Activated CD4-positive, alpha-beta memory T cell treated with anti-CD3 and anti-CD28 coated beads for 36 hours (primary cell): ENCODE measurements at regions of chr4 and their contacts with region 1.

Region 1: DNA sequence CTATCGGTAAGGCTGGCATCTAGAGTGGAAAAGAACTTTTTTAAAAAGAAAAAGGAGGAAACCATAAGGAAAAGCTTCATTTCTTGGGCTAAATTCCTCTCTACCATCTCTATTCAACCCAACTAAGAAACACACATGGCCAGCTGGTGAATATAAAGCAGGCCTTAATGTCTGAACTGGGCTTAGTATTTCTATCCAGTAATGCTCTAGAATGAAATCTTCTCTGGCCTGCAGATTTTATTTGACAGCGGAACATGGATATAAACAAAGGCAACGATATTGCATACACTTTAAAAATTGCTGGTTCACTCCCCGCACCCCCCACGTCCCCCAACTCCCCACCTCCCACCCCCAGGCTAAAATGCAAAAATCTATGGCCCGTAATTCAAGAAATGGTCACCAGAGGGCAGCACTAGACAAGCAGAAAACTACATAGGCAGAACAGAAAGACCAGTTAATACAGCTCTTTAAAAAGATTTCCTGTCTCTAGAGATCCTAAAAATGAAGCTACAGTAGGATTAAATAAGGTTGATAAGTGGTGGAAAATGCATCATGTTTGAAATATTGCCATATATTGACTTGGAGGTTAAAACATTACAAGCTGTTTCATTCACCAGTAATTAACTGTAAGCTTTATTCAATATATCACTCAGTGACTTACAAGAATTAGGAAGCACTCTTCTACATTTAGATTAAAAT is 155.2 kb upstream of the GALNT7 start:
- DNase-seq: peak; percentile 58
- H3K4me3 Mint-ChIP-seq: no peak overlapping the region
- H3K27ac Mint-ChIP-seq: no peak overlapping the region
- H3K4me1 Mint-ChIP-seq: no peaks in the 10 kb centered on the region
- H3K27me3 Mint-ChIP-seq: no peaks in the 10 kb centered on the region

Region 2: GRCh38 chr4:173076903-173077634 is 63.7 kb after region 1 on chr4:
- CTCF ChIA-PET with region 1: no interaction called
- POLR2A ChIA-PET with region 1: no interaction called
- intact Hi-C with region 1: no loop called
- DNase-seq: no peak
- H3K4me3 Mint-ChIP-seq: no peak overlapping the region
- H3K27ac Mint-ChIP-seq: no peak overlapping the region
- H3K4me1 Mint-ChIP-seq: no peaks in the 10 kb centered on the region
- H3K27me3 Mint-ChIP-seq: peaks cover 1% of the 10 kb centered on the region

Region 3: GRCh38 chr4:173168396-173169177 is 155.2 kb after region 1 on chr4 and contains the start of gene GALNT7:
- CTCF ChIA-PET with region 1: interaction called, 19 read pairs
- POLR2A ChIA-PET with region 1: no interaction called
- intact Hi-C with region 1: loop called (anchors 10 kb)
- DNase-seq: peak; percentile 79
- H3K4me3 Mint-ChIP-seq: peak within 1 kb of the TSS; percentile 91
- H3K27ac Mint-ChIP-seq: peak within 1 kb of the TSS; percentile 84
- H3K4me1 Mint-ChIP-seq: peaks cover 39% of the 10 kb centered on the region
- H3K27me3 Mint-ChIP-seq: no peaks in the 10 kb centered on the region
- total RNA-seq, gene GALNT7: 14.4 to 16.0 TPM

Region 4: DNA sequence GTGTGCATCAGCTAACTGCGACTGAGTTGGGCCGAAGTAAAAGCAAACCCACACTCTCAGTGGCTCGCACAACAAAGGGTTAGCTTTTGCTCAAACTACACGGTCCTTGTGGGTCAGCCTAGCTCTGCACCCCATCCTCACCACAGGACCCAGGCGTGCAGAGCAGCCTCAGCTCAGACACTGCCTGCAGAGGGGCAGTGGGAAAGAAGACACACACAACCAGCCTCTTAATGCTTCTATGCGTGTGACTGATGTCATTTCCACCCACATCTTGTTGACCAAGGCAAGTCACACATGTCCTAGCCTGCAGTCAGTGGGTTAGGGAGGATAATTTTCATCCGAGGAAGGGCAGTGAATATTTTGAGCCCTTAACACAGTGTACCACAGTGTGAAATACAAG is 280.3 kb after region 1 on chr4:
- CTCF ChIA-PET with region 1: interaction called, 10 read pairs
- POLR2A ChIA-PET with region 1: no interaction called
- intact Hi-C with region 1: no loop called
- DNase-seq: no peak
- H3K4me3 Mint-ChIP-seq: no peak overlapping the region
- H3K27ac Mint-ChIP-seq: no peak overlapping the region
- H3K4me1 Mint-ChIP-seq: peaks cover 8% of the 10 kb centered on the region
- H3K27me3 Mint-ChIP-seq: no peaks in the 10 kb centered on the region

Region 5: GRCh38 chr4:173307778-173308177 is 294.4 kb after region 1 on chr4:
- CTCF ChIA-PET with region 1: interaction called, 11 read pairs
- POLR2A ChIA-PET with region 1: no interaction called
- intact Hi-C with region 1: no loop called
- DNase-seq: no peak
- H3K4me3 Mint-ChIP-seq: no peak overlapping the region
- H3K27ac Mint-ChIP-seq: no peak overlapping the region
- H3K4me1 Mint-ChIP-seq: no peaks in the 10 kb centered on the region
- H3K27me3 Mint-ChIP-seq: no peaks in the 10 kb centered on the region

Region 6: GRCh38 chr4:173420324-173420752 is 407.0 kb after region 1 on chr4:
- CTCF ChIA-PET with region 1: interaction called, 18 read pairs
- POLR2A ChIA-PET with region 1: no interaction called
- intact Hi-C with region 1: loop called (anchors 1 kb)
- DNase-seq: no peak
- H3K4me3 Mint-ChIP-seq: no peak overlapping the region
- H3K27ac Mint-ChIP-seq: no peak overlapping the region
- H3K4me1 Mint-ChIP-seq: peaks cover 8% of the 10 kb centered on the region
- H3K27me3 Mint-ChIP-seq: no peaks in the 10 kb centered on the region

Region 7: GRCh38 chr4:173797296-173797695 is 783.9 kb after region 1 on chr4:
- CTCF ChIA-PET with region 1: no interaction called
- POLR2A ChIA-PET with region 1: no interaction called
- intact Hi-C with region 1: no loop called
- DNase-seq: no peak
- H3K4me3 Mint-ChIP-seq: no peak overlapping the region
- H3K27ac Mint-ChIP-seq: no peak overlapping the region
- H3K4me1 Mint-ChIP-seq: no peaks in the 10 kb centered on the region
- H3K27me3 Mint-ChIP-seq: no peaks in the 10 kb centered on the region

Region 8: GRCh38 chr4:173807347-173807746 is 794.0 kb after region 1 on chr4:
- CTCF ChIA-PET with region 1: no interaction called
- POLR2A ChIA-PET with region 1: no interaction called
- intact Hi-C with region 1: no loop called
- DNase-seq: no peak
- H3K4me3 Mint-ChIP-seq: no peak overlapping the region
- H3K27ac Mint-ChIP-seq: no peak overlapping the region
- H3K4me1 Mint-ChIP-seq: no peaks in the 10 kb centered on the region
- H3K27me3 Mint-ChIP-seq: no peaks in the 10 kb centered on the region

Region 9: DNA sequence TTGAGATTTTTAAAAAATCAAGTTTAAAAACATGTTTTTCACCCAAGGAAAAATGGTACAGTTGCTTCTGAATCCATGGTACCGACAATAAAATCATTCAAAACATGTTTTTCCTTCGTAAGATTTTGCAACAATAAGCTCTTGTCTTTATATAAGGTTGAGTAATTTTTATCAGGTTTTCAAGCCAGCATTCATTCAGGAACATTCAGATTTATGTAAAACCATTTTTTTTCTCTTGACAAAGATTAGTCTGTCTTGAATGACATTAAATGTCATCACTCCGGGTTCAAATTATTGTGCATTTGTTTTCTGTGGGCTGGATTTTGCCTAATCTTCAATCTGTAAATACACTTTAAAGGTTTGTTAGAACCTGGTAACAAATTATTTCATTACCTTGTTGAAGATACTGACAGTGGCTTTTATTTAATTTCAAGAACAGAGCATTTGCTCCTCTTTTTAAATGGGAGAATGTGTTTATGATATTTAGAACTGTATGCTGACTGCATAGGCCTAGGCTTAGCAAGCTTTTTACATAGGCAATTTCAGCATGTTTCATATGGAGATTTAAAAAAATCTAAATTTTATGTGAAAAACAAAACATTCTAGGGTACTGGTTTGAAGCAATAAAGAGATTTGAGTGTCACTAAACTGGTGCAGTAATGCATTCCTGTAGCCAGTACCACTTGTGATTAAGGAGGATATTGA is 853.1 kb after region 1 on chr4:
- CTCF ChIA-PET with region 1: no interaction called
- POLR2A ChIA-PET with region 1: no interaction called
- intact Hi-C with region 1: no loop called
- DNase-seq: no peak
- H3K4me3 Mint-ChIP-seq: no peak overlapping the region
- H3K27ac Mint-ChIP-seq: no peak overlapping the region
- H3K4me1 Mint-ChIP-seq: no peaks in the 10 kb centered on the region
- H3K27me3 Mint-ChIP-seq: no peaks in the 10 kb centered on the region